HCT116 (cell line): ENCODE measurements at regions of chr3 and their contacts with region 1.

Region 1: GRCh38 chr3:70249509-70250160 is 62.8 kb downstream of the MDFIC2 start:
- DNase-seq: no peak
- ATAC-seq: no peak
- H3K4me3 ChIP-seq: no peak overlapping the region
- H3K27ac ChIP-seq: no peak overlapping the region
- H3K4me1 ChIP-seq: no peaks in the 10 kb centered on the region
- H3K27me3 ChIP-seq: no peaks in the 10 kb centered on the region
- CTCF ChIP-seq: no peak
- POLR2A ChIP-seq: no peak
- RAD21 ChIP-seq: no peak

Region 2: GRCh38 chr3:70180664-70181063 is 69.0 kb before region 1 on chr3:
- CTCF ChIA-PET with region 1: no interaction called
- POLR2A ChIA-PET with region 1: no interaction called
- RAD21 ChIA-PET with region 1: no interaction called
- intact Hi-C with region 1: loop called (anchors 10 kb)
- DNase-seq: no peak
- ATAC-seq: no peak
- H3K4me3 ChIP-seq: no peak overlapping the region
- H3K27ac ChIP-seq: no peak overlapping the region
- H3K4me1 ChIP-seq: no peaks in the 10 kb centered on the region
- H3K27me3 ChIP-seq: no peaks in the 10 kb centered on the region
- CTCF ChIP-seq: no peak
- POLR2A ChIP-seq: no peak
- RAD21 ChIP-seq: no peak

Region 3: DNA sequence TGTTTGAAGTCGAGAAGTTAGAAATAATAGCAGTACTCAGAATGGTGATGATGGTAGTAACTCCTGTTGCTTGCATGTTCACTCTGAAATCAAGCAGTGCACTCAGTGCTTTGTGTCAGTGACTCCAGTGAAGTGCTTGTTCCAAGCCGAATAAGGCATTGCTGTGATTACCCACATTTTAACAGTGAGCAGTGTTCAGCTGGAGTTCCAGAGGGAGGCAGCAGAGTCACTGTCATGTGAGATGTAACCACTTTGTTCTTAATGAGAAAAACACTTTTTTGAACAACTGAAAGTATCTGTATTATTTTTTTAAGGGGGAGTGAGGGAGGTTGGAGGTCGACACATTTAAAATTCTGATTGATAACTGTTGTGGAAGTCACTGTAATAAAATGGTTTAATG is 59.1 kb after region 1 on chr3:
- CTCF ChIA-PET with region 1: no interaction called
- POLR2A ChIA-PET with region 1: no interaction called
- RAD21 ChIA-PET with region 1: no interaction called
- intact Hi-C with region 1: no loop called
- DNase-seq: no peak
- ATAC-seq: no peak
- H3K4me3 ChIP-seq: no peak overlapping the region
- H3K27ac ChIP-seq: no peak overlapping the region
- H3K4me1 ChIP-seq: no peaks in the 10 kb centered on the region
- H3K27me3 ChIP-seq: no peaks in the 10 kb centered on the region
- CTCF ChIP-seq: no peak
- POLR2A ChIP-seq: no peak
- RAD21 ChIP-seq: no peak

Region 4: GRCh38 chr3:71466483-71466882 is 1216.8 kb after region 1 on chr3:
- CTCF ChIA-PET with region 1: no interaction called
- POLR2A ChIA-PET with region 1: no interaction called
- RAD21 ChIA-PET with region 1: no interaction called
- intact Hi-C with region 1: no loop called
- DNase-seq: no peak
- ATAC-seq: peak; percentile 40; the same call in 1 of the 2 replicates
- H3K4me3 ChIP-seq: no peak overlapping the region
- H3K27ac ChIP-seq: no peak overlapping the region
- H3K4me1 ChIP-seq: peaks cover 0 to 16% of the 10 kb centered on the region in 2 experiments; a peak in 2 of 4 replicates
- H3K27me3 ChIP-seq: no peaks in the 10 kb centered on the region
- CTCF ChIP-seq: no peak
- POLR2A ChIP-seq: no peak
- RAD21 ChIP-seq: no peak